ENCODE measurements at regions of chr12 and their contacts with region 1.

Region 1: DNA sequence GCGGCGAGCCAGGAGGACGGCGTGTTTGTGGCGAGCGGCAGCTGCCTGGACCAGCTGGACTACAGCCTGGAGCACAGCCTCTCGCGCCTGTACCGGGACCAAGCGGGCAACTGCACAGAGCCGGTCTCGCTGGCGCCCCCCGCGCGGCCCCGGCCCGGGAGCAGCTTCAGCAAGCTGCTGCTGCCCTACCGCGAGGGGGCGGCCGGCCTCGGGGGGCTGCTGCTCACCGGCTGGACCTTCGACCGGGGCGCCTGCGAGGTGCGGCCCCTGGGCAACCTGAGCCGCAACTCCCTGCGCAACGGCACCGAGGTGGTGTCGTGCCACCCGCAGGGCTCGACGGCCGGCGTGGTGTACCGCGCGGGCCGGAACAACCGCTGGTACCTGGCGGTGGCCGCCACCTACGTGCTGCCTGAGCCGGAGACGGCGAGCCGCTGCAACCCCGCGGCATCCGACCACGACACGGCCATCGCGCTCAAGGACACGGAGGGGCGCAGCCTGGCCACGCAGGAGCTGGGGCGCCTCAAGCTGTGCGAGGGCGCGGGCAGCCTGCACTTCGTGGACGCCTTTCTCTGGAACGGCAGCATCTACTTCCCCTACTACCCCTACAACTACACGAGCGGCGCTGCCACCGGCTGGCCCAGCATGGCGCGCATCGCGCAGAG is 873 bp downstream of the PLXNC1 start:
- DNase-seq: peak; percentile 23 to 70 (median 45)
- ATAC-seq: peak; percentile 51
- H3K4me3 ChIP-seq: peak overlapping the region; percentile 75
- H3K4me3 Mint-ChIP-seq: peak overlapping the region; percentile 76 to 97 (median 93)
- H3K27ac ChIP-seq: peak overlapping the region; percentile 17
- H3K27ac Mint-ChIP-seq: peak overlapping the region in 3 of 9 donors; percentile 51 to 67 (median 63)
- H3K4me1 ChIP-seq: peaks cover 0 to 17% of the 10 kb centered on the region in 2 donors
- H3K4me1 Mint-ChIP-seq: peaks cover 18 to 53% (median 39%) of the 10 kb centered on the region in 7 donors
- H3K27me3 ChIP-seq: no peaks in the 10 kb centered on the region
- H3K27me3 Mint-ChIP-seq: peaks cover 0 to 31% (median 0%) of the 10 kb centered on the region in 5 donors

Region 2: GRCh38 chr12:94071258-94071657 is 78.0 kb before region 1 on chr12:
- CTCF ChIA-PET with region 1: no interaction called
- POLR2A ChIA-PET with region 1: no interaction called
- intact Hi-C with region 1: no loop called
- DNase-seq: peak in 1 of 9 donors; percentile 26
- ATAC-seq: no peak
- H3K4me3 ChIP-seq: no peak overlapping the region
- H3K4me3 Mint-ChIP-seq: peak overlapping the region in 5 of 10 donors; percentile 10 to 48 (median 30)
- H3K27ac ChIP-seq: no peak overlapping the region
- H3K27ac Mint-ChIP-seq: peak overlapping the region in 5 of 9 donors; percentile 19 to 79 (median 38)
- H3K4me1 ChIP-seq: peaks cover 0 to 9% of the 10 kb centered on the region in 2 donors
- H3K4me1 Mint-ChIP-seq: peaks cover 9 to 32% (median 14%) of the 10 kb centered on the region in 7 donors
- H3K27me3 ChIP-seq: no peaks in the 10 kb centered on the region
- H3K27me3 Mint-ChIP-seq: peaks cover 0 to 16% (median 0%) of the 10 kb centered on the region in 5 donors

Region 3: DNA sequence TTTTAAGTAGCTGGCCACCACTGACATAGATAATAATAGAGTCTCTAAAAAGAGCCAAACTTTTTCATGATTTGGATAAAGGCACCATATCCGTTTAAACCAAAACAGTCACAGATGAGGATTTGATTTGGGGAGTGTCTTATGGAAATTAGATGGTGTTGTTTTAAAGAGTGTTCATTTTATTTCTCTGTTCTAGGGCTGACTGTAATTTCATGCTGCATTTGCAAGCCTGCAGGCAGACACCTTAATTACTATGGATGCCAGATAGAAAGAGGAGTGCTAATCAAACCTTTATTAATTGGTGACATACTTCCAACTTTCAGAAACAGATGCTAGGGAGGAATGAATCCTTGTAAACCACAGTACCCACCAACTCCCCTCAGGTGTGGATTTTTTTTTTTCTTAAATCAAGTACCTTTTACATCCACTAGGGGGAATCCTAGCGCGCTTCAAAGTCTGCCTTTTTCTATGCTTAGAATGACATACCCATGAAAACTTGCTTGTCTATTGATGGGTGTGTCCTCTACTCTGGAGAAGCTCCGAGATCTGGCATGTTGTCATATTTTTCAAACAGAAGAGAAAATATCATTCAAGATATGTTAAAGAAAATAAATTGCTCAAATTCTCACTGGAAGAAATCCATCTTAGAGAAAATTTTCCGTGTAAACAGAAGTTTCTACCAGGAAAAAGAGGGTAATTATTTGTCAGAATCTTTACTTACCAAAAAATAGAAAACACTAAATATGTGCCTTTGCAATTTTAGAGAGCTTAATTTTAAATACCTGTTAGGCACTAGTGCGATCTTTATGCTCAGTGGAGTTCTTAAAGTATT is 15.1 kb before region 1 on chr12:
- CTCF ChIA-PET with region 1: interaction called, 9 read pairs
- POLR2A ChIA-PET with region 1: interaction called, 4 read pairs
- intact Hi-C with region 1: loop called in 1 of 2 experiments (anchors 1 kb)
- DNase-seq: peak in 7 of 9 donors; percentile 34 to 65 (median 59)
- ATAC-seq: peak; percentile 97
- H3K4me3 ChIP-seq: no peak overlapping the region
- H3K4me3 Mint-ChIP-seq: no peak overlapping the region
- H3K27ac ChIP-seq: no peak overlapping the region
- H3K27ac Mint-ChIP-seq: peak overlapping the region in 2 of 9 donors; percentile 16 to 28
- H3K4me1 ChIP-seq: no peaks in the 10 kb centered on the region
- H3K4me1 Mint-ChIP-seq: peaks cover 0 to 10% (median 4%) of the 10 kb centered on the region in 7 donors
- H3K27me3 ChIP-seq: no peaks in the 10 kb centered on the region
- H3K27me3 Mint-ChIP-seq: peaks cover 0 to 11% (median 0%) of the 10 kb centered on the region in 5 donors

Region 4: GRCh38 chr12:94262228-94263010 is 113.2 kb after region 1 on chr12:
- CTCF ChIA-PET with region 1: no interaction called
- POLR2A ChIA-PET with region 1: interaction called, 5 read pairs
- intact Hi-C with region 1: loop called (anchors 1 kb)
- DNase-seq: peak; percentile 50 to 81 (median 72)
- ATAC-seq: peak; percentile 89
- H3K4me3 ChIP-seq: peak overlapping the region; percentile 94
- H3K4me3 Mint-ChIP-seq: peak overlapping the region; percentile 80 to 99 (median 97)
- H3K27ac ChIP-seq: peak overlapping the region; percentile 91
- H3K27ac Mint-ChIP-seq: peak overlapping the region; percentile 91 to 100 (median 99)
- H3K4me1 ChIP-seq: peaks cover 15 to 18% of the 10 kb centered on the region in 2 donors
- H3K4me1 Mint-ChIP-seq: peaks cover 23 to 52% (median 46%) of the 10 kb centered on the region in 7 donors
- H3K27me3 ChIP-seq: no peaks in the 10 kb centered on the region
- H3K27me3 Mint-ChIP-seq: no peaks in the 10 kb centered on the region

Region 5: DNA sequence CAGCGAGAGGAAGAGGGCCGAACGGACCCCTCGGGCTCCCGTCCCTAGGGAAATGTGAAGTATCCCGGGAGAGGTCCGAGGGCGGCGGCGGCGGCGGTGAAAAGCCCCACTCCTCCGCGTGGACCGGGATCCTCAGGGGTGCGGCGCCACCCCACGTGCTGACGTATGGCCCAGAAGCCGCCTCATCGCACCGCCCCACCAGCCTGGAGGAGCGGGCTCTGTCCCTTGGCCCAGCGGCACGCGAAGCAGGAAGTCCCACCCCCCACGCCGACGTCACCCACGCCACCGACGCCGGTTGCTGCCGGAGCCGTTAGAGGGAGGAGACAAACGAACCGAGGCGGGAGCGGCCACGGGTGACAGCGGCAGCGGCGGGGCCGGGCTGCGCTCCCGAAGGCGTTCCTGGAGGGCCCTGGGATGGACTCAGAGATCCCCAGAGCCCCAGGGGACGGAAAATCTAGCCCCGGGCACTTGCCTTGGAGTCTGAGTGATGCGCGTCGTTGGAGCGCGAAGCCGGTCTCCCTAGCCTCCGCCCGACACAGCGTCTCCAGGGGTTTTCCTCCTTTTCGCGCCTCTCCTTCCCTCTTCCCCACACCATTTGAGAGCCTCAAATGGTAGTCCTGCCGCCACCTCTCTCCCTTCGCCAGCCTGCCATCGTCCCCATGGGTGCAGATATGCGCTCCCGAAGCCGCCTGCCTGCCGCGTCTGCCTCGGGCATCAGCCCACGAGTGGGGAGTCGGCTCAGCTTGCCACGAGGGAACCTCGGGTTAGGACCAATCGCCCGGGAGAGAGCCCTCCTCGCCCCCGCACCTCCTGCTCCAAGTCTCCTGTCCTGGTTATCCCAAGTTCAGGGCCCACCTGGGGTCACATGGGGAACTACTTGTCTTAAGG is 310.7 kb after region 1 on chr12 and contains the start of gene CEP83:
- CTCF ChIA-PET with region 1: no interaction called
- POLR2A ChIA-PET with region 1: interaction called, 3 read pairs
- intact Hi-C with region 1: loop called (anchors 1 kb)
- DNase-seq: peak; percentile 89 to 97 (median 94)
- ATAC-seq: peak; percentile 99
- H3K4me3 ChIP-seq: peak within 1 kb of the TSS; percentile 68
- H3K4me3 Mint-ChIP-seq: peak within 1 kb of the TSS; percentile 92 to 98 (median 96)
- H3K27ac ChIP-seq: peak within 1 kb of the TSS; percentile 91
- H3K27ac Mint-ChIP-seq: peak within 1 kb of the TSS; percentile 70 to 97 (median 94)
- H3K4me1 ChIP-seq: peaks cover 3 to 13% of the 10 kb centered on the region in 2 donors
- H3K4me1 Mint-ChIP-seq: peaks cover 10 to 38% (median 30%) of the 10 kb centered on the region in 7 donors
- H3K27me3 ChIP-seq: no peaks in the 10 kb centered on the region
- H3K27me3 Mint-ChIP-seq: peaks cover 0 to 12% (median 6%) of the 10 kb centered on the region in 5 donors
- total RNA-seq, gene CEP83: 12.8 to 22.7 (median 16.8) TPM

Region 6: GRCh38 chr12:94980577-94980976 is 831.3 kb after region 1 on chr12:
- CTCF ChIA-PET with region 1: no interaction called
- POLR2A ChIA-PET with region 1: no interaction called
- intact Hi-C with region 1: loop called in 1 of 2 experiments (anchors 5 kb)
- DNase-seq: peak in 7 of 9 donors; percentile 20 to 73 (median 60)
- ATAC-seq: peak; percentile 76
- H3K4me3 ChIP-seq: no peak overlapping the region
- H3K4me3 Mint-ChIP-seq: peak overlapping the region in 9 of 10 donors; percentile 24 to 73 (median 59)
- H3K27ac ChIP-seq: no peak overlapping the region
- H3K27ac Mint-ChIP-seq: peak overlapping the region in 8 of 9 donors; percentile 30 to 86 (median 72)
- H3K4me1 ChIP-seq: peaks cover 0 to 32% of the 10 kb centered on the region in 2 donors
- H3K4me1 Mint-ChIP-seq: peaks cover 22 to 88% (median 67%) of the 10 kb centered on the region in 7 donors
- H3K27me3 ChIP-seq: no peaks in the 10 kb centered on the region
- H3K27me3 Mint-ChIP-seq: no peaks in the 10 kb centered on the region